Naive thymus-derived CD4-positive, alpha-beta T cell (primary cell): ENCODE measurements at regions of chr12 and their contacts with region 1.

Region 1: DNA sequence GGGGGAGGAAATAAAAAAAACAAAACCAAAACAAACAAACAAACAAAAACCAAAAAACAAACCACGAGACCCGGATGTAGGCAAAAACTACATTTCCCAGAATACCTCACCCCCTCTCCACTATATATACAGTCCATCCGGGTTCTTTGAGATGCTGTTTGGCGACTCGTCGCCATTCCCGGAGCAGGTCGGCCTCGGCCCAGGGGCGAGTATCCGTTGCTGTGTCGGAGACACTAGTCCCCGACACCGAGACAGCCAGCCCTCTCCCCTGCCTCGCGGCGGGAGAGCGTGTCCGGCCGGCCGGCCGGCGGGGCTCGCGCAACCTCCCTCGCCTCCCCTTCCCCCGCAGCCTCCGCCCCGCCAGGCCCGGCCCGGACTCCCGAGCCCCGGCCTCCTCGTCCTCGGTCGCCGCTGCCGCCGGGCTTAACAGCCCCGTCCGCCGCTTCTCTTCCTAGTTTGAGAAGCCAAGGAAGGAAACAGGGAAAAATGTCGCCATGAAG is at the start of gene RNF10:
- DNase-seq: peak; percentile 61 to 88 (median 85)
- ATAC-seq: peak; percentile 84
- H3K4me3 ChIP-seq: peak within 1 kb of the TSS; percentile 92
- H3K4me3 Mint-ChIP-seq: peak within 1 kb of the TSS; percentile 87 to 98 (median 96)
- H3K27ac ChIP-seq: peak within 1 kb of the TSS; percentile 97
- H3K27ac Mint-ChIP-seq: peak within 1 kb of the TSS; percentile 90 to 95 (median 95)
- H3K4me1 ChIP-seq: peaks cover 34 to 40% of the 10 kb centered on the region in 2 donors
- H3K4me1 Mint-ChIP-seq: peaks cover 28 to 57% (median 54%) of the 10 kb centered on the region in 7 donors
- H3K27me3 ChIP-seq: no peaks in the 10 kb centered on the region
- H3K27me3 Mint-ChIP-seq: peaks cover 0 to 2% (median 0%) of the 10 kb centered on the region in 5 donors
- total RNA-seq, gene RNF10: 171 to 361 (median 205) TPM

Region 2: DNA sequence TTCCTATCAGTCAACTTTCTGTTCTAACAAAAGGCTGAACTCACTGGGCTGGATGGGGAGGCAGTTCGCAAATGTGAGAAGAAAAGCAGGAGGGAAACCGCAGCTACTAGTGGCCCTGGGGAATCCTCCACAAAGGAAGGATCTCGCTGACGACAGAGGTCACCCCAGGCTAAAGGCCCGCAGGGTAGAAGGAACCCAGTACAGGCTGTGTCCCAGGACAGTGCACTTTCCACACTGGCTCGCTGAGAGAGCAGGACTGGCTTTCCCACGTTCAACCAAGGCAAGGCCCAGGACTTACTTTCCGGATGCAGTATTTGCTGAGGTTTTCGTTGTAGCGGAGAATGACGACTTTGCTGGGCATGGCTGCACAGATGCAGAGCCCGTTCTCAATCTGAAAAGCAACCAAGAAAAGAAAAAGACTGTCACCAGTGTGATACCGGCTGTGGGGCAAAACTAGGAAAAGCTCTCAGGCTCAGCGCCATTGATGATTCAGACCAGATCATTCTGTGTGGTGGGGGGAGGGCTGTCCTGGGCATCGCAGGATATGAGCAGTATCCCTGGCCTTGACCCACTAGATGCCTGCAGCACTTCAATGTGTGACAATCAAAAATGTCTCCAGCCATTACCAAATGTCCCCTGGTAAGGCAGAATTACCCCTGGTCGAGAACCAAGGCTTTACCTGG is 830.0 kb before region 1 on chr12:
- CTCF ChIA-PET with region 1: no interaction called
- POLR2A ChIA-PET with region 1: no interaction called
- intact Hi-C with region 1: no loop called
- DNase-seq: peak in 1 of 9 donors; percentile 1
- ATAC-seq: no peak
- H3K4me3 ChIP-seq: no peak overlapping the region
- H3K4me3 Mint-ChIP-seq: no peak overlapping the region
- H3K27ac ChIP-seq: no peak overlapping the region
- H3K27ac Mint-ChIP-seq: no peak overlapping the region
- H3K4me1 ChIP-seq: no peaks in the 10 kb centered on the region
- H3K4me1 Mint-ChIP-seq: no peaks in the 10 kb centered on the region
- H3K27me3 ChIP-seq: no peaks in the 10 kb centered on the region
- H3K27me3 Mint-ChIP-seq: no peaks in the 10 kb centered on the region

Region 3: DNA sequence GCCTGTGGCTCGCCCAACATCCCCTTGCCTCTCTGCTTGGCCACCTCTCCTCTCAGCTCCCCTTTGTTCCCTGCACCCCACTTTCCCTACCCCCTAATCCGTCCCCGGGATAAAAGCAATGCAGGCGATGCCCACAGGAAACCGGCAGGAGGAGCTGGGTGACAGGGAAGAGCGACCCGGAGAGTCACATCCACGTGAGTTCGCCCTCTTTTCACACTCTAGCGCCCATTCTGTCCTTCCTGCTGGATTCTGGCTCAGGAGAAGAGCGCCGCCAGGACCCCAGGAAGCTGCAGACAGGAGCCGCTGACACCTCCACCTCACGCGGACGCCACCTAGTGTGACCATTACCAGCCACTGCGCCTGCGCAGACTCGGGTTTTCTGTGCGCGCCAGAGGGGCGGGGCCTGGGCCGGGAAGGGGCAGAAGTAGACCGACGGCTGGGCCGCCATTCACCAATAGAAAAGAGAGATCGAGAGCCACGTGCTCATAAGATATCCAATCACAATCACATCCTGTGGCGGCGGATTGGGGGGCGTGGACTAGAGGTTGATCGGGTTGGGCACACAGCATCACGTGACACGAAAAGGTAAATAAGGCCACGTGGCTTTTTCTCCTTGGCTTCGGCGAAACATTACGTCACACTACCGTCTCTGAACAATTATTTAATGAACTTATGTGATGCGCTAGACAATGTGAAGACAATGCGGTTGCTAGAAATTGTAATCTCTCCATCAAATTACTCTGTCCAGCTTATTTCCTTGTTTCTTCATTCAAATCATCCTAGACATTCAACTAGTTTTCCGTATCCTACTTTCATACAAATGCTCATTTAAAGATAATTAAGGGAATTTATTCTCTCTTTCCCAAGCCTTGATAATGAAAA is 216.8 kb before region 1 on chr12:
- CTCF ChIA-PET with region 1: no interaction called
- POLR2A ChIA-PET with region 1: no interaction called
- intact Hi-C with region 1: loop called (anchors 1 to 5 kb)
- DNase-seq: peak; percentile 100
- ATAC-seq: peak; percentile 100
- H3K4me3 ChIP-seq: peak overlapping the region; percentile 81
- H3K4me3 Mint-ChIP-seq: peak overlapping the region; percentile 86 to 95 (median 93)
- H3K27ac ChIP-seq: peak overlapping the region; percentile 87
- H3K27ac Mint-ChIP-seq: peak overlapping the region; percentile 85 to 99 (median 98)
- H3K4me1 ChIP-seq: peaks cover 5 to 10% of the 10 kb centered on the region in 2 donors
- H3K4me1 Mint-ChIP-seq: peaks cover 4 to 16% (median 14%) of the 10 kb centered on the region in 7 donors
- H3K27me3 ChIP-seq: no peaks in the 10 kb centered on the region
- H3K27me3 Mint-ChIP-seq: peaks cover 0 to 4% (median 0%) of the 10 kb centered on the region in 5 donors

Region 4: DNA sequence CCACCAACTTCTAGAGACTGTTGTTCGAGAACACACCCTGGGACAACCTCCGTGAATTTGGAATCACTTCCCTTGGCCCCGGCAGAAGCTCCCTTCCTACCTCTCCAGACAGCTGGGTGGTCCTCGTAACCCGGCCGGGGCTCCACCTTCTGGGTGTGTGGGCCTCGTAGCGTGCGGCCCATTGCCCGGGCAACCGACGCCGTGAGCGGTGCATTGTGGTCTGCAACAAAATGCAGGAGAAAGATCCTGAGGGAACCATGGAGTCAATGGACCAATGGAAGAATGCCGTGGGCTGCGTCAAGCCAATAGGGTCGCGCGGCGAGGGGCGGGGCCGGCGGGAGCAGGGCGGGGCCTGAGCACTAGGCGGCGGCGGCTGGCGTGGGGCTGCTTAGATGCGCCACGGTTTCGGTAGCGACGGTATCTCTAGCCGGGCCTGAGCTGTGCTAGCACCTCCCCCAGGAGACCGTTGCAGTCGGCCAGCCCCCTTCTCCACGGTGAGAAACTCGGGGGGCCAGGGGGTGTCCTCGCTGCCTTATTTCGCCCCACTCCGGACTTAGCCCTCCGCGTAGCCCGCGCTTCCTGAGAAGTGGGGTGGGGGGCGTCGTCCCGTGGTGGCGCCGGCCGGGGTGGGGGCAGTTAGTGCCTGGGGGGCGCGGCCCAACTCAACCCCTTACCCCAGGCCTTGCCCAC is 38.4 kb before region 1 on chr12 and contains the start of gene DYNLL1:
- CTCF ChIA-PET with region 1: interaction called, 4 read pairs
- POLR2A ChIA-PET with region 1: interaction called, 14 read pairs
- intact Hi-C with region 1: loop called (anchors 1 kb)
- DNase-seq: peak; percentile 95 to 99 (median 97)
- ATAC-seq: peak; percentile 99
- H3K4me3 ChIP-seq: peak within 1 kb of the TSS; percentile 82
- H3K4me3 Mint-ChIP-seq: peak within 1 kb of the TSS; percentile 83 to 98 (median 94)
- H3K27ac ChIP-seq: peak within 1 kb of the TSS; percentile 84
- H3K27ac Mint-ChIP-seq: peak within 1 kb of the TSS; percentile 58 to 94 (median 90)
- H3K4me1 ChIP-seq: peaks cover 9% of the 10 kb centered on the region in 2 donors
- H3K4me1 Mint-ChIP-seq: peaks cover 13 to 48% (median 33%) of the 10 kb centered on the region in 7 donors
- H3K27me3 ChIP-seq: no peaks in the 10 kb centered on the region
- H3K27me3 Mint-ChIP-seq: no peaks in the 10 kb centered on the region
- total RNA-seq, gene DYNLL1: 35.0 to 301 (median 72.7) TPM

Region 5: DNA sequence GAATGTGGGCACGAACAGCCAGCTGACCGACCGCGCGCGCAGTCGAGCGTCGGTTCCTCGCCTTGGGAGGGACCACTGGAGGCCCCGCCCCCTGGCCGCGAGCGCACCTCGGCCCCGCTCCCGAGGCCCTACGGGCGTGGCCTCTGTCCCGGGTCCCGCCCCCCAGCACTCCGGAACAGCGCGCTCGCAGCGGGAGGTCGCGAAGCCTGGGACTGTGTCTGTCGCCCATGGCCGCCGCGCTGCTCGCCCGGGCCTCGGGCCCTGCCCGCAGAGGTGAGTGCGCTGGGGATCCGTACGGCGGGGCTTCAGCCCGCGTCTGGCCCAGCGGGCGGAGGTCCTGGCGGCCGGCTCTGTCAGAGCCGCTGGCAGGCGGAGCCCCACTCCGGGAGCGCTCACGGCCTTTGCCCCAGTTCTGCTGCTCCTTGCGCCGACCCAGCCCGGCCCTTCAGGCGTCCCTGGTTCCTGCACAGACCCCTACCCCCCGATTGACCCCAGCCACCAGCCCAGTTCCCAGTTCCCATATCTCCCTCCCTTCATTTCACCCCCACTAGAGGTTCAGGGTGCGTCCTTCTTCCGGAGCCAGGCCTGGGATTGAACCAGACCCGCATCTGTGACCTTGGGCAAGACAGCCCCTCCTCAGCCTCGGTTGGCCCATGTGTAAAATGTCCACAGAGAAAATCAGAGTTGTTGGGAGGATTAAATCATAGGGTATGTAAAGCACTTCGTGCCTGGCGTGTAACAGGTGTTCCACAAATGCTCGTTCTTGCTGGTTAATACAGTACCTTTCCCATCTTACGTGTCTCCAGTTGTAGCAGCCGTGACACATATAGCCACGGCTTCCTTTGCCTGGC is 191.6 kb after region 1 on chr12 and contains the start of gene ACADS:
- CTCF ChIA-PET with region 1: no interaction called
- POLR2A ChIA-PET with region 1: no interaction called
- intact Hi-C with region 1: loop called in 1 of 2 experiments (anchors 5 kb)
- DNase-seq: peak; percentile 78 to 94 (median 85)
- ATAC-seq: peak; percentile 100
- H3K4me3 ChIP-seq: peak within 1 kb of the TSS; percentile 78
- H3K4me3 Mint-ChIP-seq: peak within 1 kb of the TSS; percentile 88 to 98 (median 94)
- H3K27ac ChIP-seq: peak within 1 kb of the TSS; percentile 76
- H3K27ac Mint-ChIP-seq: peak within 1 kb of the TSS; percentile 56 to 95 (median 82)
- H3K4me1 ChIP-seq: peaks cover 12 to 13% of the 10 kb centered on the region in 2 donors
- H3K4me1 Mint-ChIP-seq: peaks cover 6 to 28% (median 23%) of the 10 kb centered on the region in 7 donors
- H3K27me3 ChIP-seq: no peaks in the 10 kb centered on the region
- H3K27me3 Mint-ChIP-seq: no peaks in the 10 kb centered on the region
- total RNA-seq, gene ACADS: 10.4 to 18.1 (median 15.7) TPM

Region 6: DNA sequence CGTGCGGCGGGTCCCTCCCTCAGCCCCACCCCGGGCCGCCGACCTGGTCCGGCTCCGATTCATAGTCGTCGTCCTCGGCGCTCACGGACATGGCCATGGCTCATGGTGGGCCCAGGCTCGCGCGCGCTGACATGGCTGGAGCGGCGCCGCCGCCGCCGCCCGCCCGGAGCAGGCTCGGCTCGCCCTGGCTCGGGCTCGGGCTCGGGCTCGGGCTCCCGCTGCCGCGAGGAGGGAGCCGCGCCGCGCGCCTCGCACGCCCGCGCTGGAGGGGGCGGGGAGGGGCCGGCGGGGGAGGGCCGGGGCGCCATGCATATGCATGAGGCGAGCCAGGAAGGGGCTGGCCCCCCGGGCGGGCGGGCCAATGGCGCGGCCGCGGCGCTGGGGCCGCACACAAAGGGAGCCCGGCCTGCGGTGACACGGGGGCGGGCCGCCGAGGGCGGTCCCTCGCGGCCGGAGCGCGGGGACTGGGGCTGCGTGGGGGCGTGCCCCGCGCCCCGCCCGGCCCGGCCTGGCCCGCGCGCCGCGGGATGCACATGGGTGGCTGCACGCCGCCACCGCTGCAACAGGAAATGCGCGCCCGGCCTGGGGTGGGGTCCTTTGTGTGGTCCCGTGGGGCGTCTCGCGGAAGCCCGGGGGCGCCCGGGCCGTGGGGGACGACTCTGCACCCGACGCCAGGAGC is 933.0 kb after region 1 on chr12:
- CTCF ChIA-PET with region 1: no interaction called
- POLR2A ChIA-PET with region 1: no interaction called
- intact Hi-C with region 1: loop called in 1 of 2 experiments (anchors 10 kb)
- DNase-seq: peak; percentile 79 to 93 (median 86)
- ATAC-seq: peak; percentile 92
- H3K4me3 ChIP-seq: peak overlapping the region; percentile 44
- H3K4me3 Mint-ChIP-seq: peak overlapping the region in 6 of 10 donors; percentile 45 to 90 (median 59)
- H3K27ac ChIP-seq: peak overlapping the region; percentile 73
- H3K27ac Mint-ChIP-seq: no peak overlapping the region
- H3K4me1 ChIP-seq: peaks cover 7 to 17% of the 10 kb centered on the region in 2 donors
- H3K4me1 Mint-ChIP-seq: peaks cover 18 to 34% (median 30%) of the 10 kb centered on the region in 7 donors
- H3K27me3 ChIP-seq: no peaks in the 10 kb centered on the region
- H3K27me3 Mint-ChIP-seq: peaks cover 0 to 3% (median 0%) of the 10 kb centered on the region in 5 donors